A673 (cell line): ENCODE measurements at regions of chr10 and their contacts with region 1.

Region 1: DNA sequence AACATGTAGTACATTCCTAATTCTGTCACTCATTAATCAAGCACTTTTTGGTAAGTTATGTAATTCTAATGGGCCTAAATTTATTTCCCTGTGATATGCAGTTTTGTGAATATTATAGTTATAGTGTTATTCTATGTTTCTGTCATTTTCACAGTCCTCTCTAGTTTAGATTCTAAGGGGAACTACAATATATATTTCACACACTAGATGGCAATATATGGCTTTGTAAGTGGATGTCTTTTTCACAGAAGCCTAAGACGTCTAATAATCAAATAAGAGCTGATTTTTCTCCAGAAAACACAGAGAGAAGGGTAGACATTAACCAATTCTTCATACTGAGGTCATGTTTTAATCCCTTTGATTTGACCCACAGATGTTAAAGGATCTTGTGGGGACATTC is 18.0 kb downstream of the RNLS start:
- DNase-seq: peak; percentile 64
- H3K4me3 ChIP-seq: no peak overlapping the region
- H3K27ac ChIP-seq: no peak overlapping the region
- H3K4me1 ChIP-seq: no peaks in the 10 kb centered on the region
- H3K27me3 ChIP-seq: no peaks in the 10 kb centered on the region
- CTCF ChIP-seq: peak; percentile 58

Region 2: DNA sequence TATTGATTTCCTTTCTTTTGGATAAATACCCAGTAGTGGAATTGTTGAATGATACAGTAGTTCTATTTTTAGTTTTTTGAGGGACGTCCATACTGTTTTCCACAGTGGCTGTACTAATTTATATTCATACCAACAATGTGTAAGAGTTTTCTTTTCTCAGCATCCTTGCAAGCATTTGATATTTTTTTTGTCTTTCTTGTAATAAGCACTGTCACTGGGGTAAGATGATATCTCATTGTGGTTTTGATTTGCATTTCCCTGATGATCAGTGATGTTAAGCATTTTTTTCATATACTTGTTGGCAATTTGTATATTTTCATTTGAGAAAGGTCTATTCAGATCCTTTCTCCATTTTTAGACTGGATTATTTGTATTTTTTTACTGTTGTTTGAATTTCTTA is 392.9 kb before region 1 on chr10:
- CTCF ChIA-PET with region 1: no interaction called
- POLR2A ChIA-PET with region 1: no interaction called
- intact Hi-C with region 1: no loop called
- DNase-seq: no peak
- H3K4me3 ChIP-seq: no peak overlapping the region
- H3K27ac ChIP-seq: no peak overlapping the region
- H3K4me1 ChIP-seq: no peaks in the 10 kb centered on the region
- H3K27me3 ChIP-seq: no peaks in the 10 kb centered on the region
- CTCF ChIP-seq: no peak

Region 3: DNA sequence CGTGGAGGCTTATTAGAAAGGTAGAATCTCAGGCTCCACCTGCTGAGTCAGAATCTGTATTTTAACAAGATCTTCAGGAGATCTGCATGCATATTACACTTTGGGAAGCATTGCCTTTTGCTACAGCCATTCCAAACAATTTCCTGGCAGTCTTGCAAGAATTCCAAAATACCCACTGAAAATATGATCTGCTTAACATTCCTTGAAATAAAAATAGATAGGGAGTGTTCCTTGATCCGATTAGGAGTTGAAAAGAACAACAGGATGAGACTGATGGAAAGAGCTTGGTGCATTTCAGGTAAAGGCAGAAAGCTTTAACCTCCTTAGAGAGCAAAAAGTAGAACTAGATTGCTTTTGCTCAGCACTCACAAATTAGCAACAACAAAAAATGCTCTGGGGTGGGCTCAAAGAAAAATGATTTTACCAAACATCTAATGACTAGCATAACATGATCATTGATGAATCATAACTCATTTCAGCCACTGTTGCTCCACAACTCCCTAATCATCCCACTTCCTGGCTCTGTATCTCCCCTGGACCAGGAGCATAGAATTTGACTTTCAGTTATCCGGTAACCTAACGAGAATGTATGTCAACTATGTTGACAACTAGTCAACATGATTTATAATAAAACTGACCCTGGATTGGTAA is 97.1 kb before region 1 on chr10:
- CTCF ChIA-PET with region 1: no interaction called
- POLR2A ChIA-PET with region 1: no interaction called
- intact Hi-C with region 1: no loop called
- DNase-seq: no peak
- H3K4me3 ChIP-seq: no peak overlapping the region
- H3K27ac ChIP-seq: no peak overlapping the region
- H3K4me1 ChIP-seq: no peaks in the 10 kb centered on the region
- H3K27me3 ChIP-seq: no peaks in the 10 kb centered on the region
- CTCF ChIP-seq: no peak

Region 4: GRCh38 chr10:88810196-88810961 is 245.3 kb after region 1 on chr10:
- CTCF ChIA-PET with region 1: interaction called, 8 read pairs
- POLR2A ChIA-PET with region 1: no interaction called
- intact Hi-C with region 1: loop called (anchors 2 kb)
- DNase-seq: peak; percentile 68
- H3K4me3 ChIP-seq: no peak overlapping the region
- H3K27ac ChIP-seq: no peak overlapping the region
- H3K4me1 ChIP-seq: no peaks in the 10 kb centered on the region
- H3K27me3 ChIP-seq: no peaks in the 10 kb centered on the region
- CTCF ChIP-seq: peak; percentile 91

Region 5: GRCh38 chr10:89414146-89414878 is 849.2 kb after region 1 on chr10 and contains the start of gene IFIT5:
- CTCF ChIA-PET with region 1: no interaction called
- POLR2A ChIA-PET with region 1: no interaction called
- intact Hi-C with region 1: loop called (anchors 5 kb)
- DNase-seq: peak; percentile 86
- H3K4me3 ChIP-seq: peak within 1 kb of the TSS; percentile 60
- H3K27ac ChIP-seq: peak within 1 kb of the TSS; percentile 76
- H3K4me1 ChIP-seq: peaks cover 14% of the 10 kb centered on the region
- H3K27me3 ChIP-seq: no peaks in the 10 kb centered on the region
- CTCF ChIP-seq: no peak
- total RNA-seq, gene IFIT5: 14.2 and 15.8 TPM in 2 replicates